Activated CD4-positive, alpha-beta T cell treated with anti-CD3 and anti-CD28 coated beads for 36 hours (primary cell): ENCODE measurements at regions of chr7 and their contacts with region 1.

Region 1: DNA sequence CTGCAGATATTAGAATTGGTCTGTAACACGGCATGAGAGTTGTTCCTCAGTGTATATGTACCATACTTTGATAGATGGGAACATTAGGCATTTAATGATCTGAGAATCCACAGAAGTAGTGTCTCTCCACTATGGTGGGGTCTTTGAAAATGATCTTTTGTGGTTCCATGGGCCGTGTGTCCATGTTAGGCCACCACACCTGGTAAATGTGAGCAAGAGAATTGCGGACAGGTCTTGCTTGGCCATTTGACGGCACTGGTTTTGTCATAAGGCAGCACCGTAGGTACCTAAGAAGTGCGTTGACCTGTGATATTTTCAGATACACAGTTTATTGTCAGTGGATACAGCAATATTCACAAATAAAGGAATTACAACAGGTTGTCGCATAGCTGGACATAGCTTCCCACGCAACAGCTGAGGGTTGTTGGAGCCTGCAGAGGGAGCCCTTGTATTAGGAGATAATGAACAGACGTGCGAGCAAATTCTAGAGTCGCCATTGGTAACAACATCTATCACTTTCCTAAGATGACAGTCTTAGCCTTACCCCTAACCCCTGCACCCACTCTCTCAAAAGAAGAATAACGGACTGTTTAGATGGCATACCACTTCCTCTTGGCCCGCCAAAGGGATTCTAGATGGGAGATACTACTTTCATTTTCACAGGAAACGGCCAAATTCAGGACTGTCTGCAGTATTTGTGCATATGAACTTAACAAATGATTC is 111.4 kb downstream of the COL28A1 start:
- DNase-seq: peak; percentile 65
- ATAC-seq: peak; percentile 92
- H3K4me3 Mint-ChIP-seq: peak overlapping the region; percentile 55
- H3K27ac Mint-ChIP-seq: no peak overlapping the region
- H3K4me1 Mint-ChIP-seq: peaks cover 6% of the 10 kb centered on the region
- H3K27me3 Mint-ChIP-seq: no peaks in the 10 kb centered on the region

Region 2: GRCh38 chr7:7505915-7506314 is 81.6 kb after region 1 on chr7:
- CTCF ChIA-PET with region 1: no interaction called
- POLR2A ChIA-PET with region 1: no interaction called
- intact Hi-C with region 1: no loop called
- DNase-seq: no peak
- ATAC-seq: no peak
- H3K4me3 Mint-ChIP-seq: no peak overlapping the region
- H3K27ac Mint-ChIP-seq: no peak overlapping the region
- H3K4me1 Mint-ChIP-seq: no peaks in the 10 kb centered on the region
- H3K27me3 Mint-ChIP-seq: peaks cover 2% of the 10 kb centered on the region

Region 3: GRCh38 chr7:7542251-7542835 is 118.0 kb after region 1 on chr7:
- CTCF ChIA-PET with region 1: no interaction called
- POLR2A ChIA-PET with region 1: no interaction called
- intact Hi-C with region 1: loop called in 1 of 2 experiments (anchors 2 kb)
- DNase-seq: no peak
- ATAC-seq: no peak
- H3K4me3 Mint-ChIP-seq: no peak overlapping the region
- H3K27ac Mint-ChIP-seq: no peak overlapping the region
- H3K4me1 Mint-ChIP-seq: no peaks in the 10 kb centered on the region
- H3K27me3 Mint-ChIP-seq: peaks cover 7% of the 10 kb centered on the region

Region 4: GRCh38 chr7:8190119-8190895 is 766.0 kb after region 1 on chr7:
- CTCF ChIA-PET with region 1: interaction called, 6 read pairs
- POLR2A ChIA-PET with region 1: no interaction called
- intact Hi-C with region 1: loop called in 1 of 2 experiments (anchors 1 kb)
- DNase-seq: peak; percentile 73
- ATAC-seq: peak; percentile 86
- H3K4me3 Mint-ChIP-seq: no peak overlapping the region
- H3K27ac Mint-ChIP-seq: no peak overlapping the region
- H3K4me1 Mint-ChIP-seq: peaks cover 8% of the 10 kb centered on the region
- H3K27me3 Mint-ChIP-seq: no peaks in the 10 kb centered on the region

Region 5: DNA sequence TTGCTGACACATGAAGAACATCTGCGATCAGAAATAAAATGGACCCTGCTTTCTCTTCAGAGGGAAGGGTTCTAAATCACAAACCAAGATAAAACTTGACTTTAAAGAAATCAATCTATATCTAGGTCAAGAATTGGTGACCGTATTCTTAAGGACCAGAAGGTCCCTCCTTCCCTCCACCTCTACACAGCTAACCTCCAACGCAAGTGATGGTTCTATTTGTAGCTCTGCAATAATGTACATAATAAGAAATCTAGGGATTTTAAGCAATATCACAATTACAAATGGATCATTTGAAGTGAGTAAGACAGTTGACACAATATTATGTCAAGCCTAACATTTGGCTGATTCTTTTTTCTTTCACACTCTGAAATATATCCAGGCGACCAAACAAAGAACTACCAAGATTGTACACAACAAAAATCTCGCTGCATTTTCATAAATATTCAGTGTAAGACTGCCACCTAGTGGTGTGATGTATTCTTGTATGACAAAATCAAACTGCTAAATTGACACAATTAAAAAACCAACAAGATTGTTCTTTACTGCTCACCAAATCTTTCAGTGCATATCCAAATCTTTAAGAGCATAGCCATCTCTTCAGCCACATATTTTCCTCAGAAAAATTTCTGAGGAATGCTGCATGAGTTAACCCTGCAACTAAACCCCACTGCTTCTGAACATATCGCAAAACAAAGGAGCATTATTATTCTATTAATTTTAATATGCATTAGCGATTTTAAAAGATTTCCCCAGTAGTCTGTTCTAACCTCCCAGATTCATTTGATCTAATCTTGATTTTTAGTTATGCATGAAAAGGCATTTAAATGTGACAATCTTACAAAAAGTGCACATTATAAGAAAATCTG is 793.1 kb after region 1 on chr7:
- CTCF ChIA-PET with region 1: no interaction called
- POLR2A ChIA-PET with region 1: no interaction called
- intact Hi-C with region 1: loop called (anchors 1 to 2 kb)
- DNase-seq: no peak
- ATAC-seq: peak; percentile 49
- H3K4me3 Mint-ChIP-seq: no peak overlapping the region
- H3K27ac Mint-ChIP-seq: no peak overlapping the region
- H3K4me1 Mint-ChIP-seq: peaks cover 2% of the 10 kb centered on the region
- H3K27me3 Mint-ChIP-seq: no peaks in the 10 kb centered on the region

Region 6: DNA sequence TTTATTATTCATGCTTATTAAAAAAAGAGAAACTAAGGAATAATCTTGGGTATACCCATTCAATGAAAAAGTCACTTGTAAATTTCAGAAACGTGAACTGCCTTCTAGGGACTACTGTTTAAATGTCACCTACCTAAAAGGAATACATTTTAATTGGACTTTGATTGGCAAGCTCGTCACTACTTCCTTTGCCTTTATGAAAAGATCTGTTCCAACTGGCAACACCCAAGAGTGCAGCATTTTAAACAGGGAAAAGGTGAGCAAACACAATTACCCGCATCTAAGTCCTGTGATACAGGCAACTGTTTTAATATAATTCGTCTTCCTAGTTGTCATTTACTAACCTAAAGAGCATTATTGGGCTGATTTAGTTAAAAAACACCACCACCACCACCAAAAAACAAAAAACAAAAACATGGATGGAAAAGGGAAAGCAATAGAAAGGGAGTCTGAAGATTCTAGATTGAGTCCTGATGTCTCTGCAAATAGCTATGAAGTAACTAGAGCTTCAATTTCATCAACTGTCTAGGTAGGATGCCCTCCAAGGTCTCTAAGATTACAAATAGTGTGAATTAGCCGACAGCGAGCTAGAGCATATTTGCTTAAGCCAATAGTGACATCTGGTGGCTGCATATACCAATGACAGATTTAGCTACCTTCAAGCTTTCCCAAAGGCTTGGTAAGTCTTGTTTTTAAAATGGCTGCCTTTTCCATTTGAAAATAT is 871.5 kb after region 1 on chr7:
- CTCF ChIA-PET with region 1: interaction called, 4 read pairs
- POLR2A ChIA-PET with region 1: no interaction called
- intact Hi-C with region 1: loop called in 1 of 2 experiments (anchors 5 kb)
- DNase-seq: peak; percentile 25
- ATAC-seq: peak; percentile 80
- H3K4me3 Mint-ChIP-seq: no peak overlapping the region
- H3K27ac Mint-ChIP-seq: no peak overlapping the region
- H3K4me1 Mint-ChIP-seq: peaks cover 2% of the 10 kb centered on the region
- H3K27me3 Mint-ChIP-seq: peaks cover 10% of the 10 kb centered on the region